BJ (cell line): ENCODE measurements at regions of chr12 and their contacts with region 1.

Region 1: DNA sequence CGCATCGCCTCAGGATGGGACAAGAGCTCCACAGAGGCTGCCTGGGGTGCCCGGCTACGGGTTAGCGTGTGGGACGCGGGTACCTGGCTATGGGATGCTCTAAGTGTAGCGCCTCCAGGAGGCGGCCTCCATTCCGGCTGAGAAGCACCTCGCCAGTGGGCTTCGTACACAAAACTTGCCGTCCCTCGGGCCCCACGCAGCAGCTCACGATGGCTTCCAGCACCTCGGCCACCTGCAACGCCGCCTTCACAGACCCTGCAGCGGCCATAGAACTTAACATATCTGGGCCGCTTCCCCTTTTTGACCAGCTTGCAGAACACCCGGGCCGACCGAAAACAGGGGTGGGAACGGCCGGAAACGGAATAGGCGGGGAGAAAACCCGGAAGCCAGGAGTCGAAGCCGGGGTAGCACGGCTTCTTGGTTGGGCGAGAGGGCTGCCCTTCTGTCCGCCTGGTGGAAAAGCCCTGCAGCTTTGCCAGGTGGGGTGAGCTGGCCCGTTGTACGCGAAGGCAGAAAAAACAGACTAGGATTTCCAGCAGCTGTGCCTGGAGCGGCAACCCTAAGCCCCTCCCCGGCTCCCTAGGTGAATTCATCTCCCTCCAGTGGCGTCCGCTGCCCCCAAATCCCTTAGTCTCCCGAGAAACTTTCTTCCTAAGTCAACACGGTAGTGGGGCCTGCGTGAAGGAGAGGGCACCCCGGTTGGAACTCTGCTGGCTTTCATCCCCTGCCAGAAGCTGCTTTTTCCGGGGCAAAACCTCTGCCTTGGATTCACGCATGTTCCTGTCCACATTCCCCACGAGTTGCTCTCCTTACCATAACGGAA is at the start of gene BBS10:
- DNase-seq: peak; percentile 53
- H3K4me3 ChIP-seq: peak within 1 kb of the TSS; percentile 65
- H3K27me3 ChIP-seq: no peaks in the 10 kb centered on the region
- CTCF ChIP-seq: peak; percentile 60
- polyA plus RNA-seq, gene BBS10: 4.9 and 10.2 TPM in 2 replicates

Region 2: DNA sequence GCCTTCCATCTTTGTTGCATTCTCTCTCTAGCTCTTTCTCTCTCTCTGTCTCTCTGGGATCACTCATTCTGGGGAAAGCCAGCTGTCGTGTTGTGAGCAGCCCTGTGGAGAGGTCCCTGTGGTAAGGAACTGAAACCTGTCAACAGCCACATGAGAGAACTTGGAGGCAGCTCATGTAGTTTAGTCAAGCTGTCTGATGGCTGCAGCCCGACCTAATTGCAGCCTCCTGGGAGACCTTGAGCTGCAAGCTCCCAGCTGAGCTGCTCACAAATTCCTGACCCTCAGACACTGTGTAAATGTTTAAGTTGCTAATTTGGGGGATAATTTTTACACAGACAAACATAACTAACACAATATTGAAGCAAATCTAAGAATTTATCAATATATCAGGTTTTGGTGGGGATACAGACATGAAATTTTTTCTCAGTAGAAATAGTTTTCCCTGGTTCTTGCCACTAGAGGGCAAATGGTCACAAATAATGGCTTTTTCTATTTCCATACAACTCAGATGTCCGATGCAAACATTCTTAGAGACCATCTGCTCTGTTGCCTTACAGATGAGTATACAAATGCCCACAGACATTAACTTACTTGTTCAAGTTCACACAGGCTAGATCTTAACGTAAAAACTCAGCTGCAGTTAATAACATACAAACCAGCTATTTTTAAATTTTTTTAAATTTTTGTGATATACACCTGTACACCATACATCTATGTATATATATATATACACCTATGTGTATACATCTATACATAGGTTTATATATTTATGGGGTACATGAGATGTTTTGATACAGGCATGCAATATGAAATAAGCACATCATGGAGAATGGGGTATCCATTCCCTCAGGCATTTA is 821.4 kb before region 1 on chr12:
- CTCF ChIA-PET with region 1: interaction called, 11 read pairs
- POLR2A ChIA-PET with region 1: no interaction called
- DNase-seq: no peak
- H3K4me3 ChIP-seq: no peak overlapping the region
- H3K27me3 ChIP-seq: no peaks in the 10 kb centered on the region
- CTCF ChIP-seq: peak; percentile 63

Region 3: DNA sequence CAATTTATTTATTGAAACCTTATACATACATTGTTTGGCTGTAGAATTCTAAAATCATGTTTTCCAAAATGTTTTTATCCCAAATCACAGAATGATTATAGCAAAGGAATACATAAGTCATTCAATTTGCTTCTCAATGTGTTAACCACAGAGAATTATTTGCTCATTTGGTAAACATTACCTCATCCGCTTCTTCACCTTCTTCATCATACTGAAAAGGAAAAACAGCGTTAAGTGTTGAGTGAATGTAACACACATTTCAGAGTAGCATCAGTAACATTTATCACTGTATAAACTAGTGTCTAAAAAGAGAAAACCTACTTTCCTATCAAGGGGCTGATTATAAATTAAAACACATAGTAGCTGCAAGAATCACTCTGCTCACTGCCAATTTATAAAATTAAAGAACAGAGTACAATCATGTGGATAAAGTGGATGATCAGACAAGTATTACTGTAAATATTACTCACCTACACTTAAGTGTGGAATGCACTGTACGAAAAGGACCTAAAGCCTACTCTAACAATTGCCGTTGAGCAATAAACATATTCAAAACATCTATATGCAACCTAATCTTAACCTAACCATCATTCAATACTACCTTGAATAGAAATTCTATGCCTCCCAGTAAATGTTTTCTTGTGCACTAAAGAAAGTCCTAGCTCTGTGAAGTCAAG is 298.6 kb before region 1 on chr12:
- CTCF ChIA-PET with region 1: no interaction called
- POLR2A ChIA-PET with region 1: no interaction called
- DNase-seq: no peak
- H3K4me3 ChIP-seq: no peak overlapping the region
- H3K27me3 ChIP-seq: no peaks in the 10 kb centered on the region
- CTCF ChIP-seq: no peak

Region 4: GRCh38 chr12:76366163-76366562 is 17.9 kb after region 1 on chr12:
- CTCF ChIA-PET with region 1: no interaction called
- POLR2A ChIA-PET with region 1: no interaction called
- DNase-seq: no peak
- H3K4me3 ChIP-seq: no peak overlapping the region
- H3K27me3 ChIP-seq: no peaks in the 10 kb centered on the region
- CTCF ChIP-seq: no peak